ENCODE measurements at regions of chr19 and their contacts with region 1.

Region 1: GRCh38 chr19:11293433-11294389 is 2.2 kb upstream of the TSPAN16 start:
- DNase-seq: peak; percentile 96
- ATAC-seq: peak; percentile 97

Region 2: GRCh38 chr19:10828981-10829821 is 464.5 kb before region 1 on chr19:
- intact Hi-C with region 1: no loop called
- DNase-seq: no peak
- ATAC-seq: no peak

Region 3: DNA sequence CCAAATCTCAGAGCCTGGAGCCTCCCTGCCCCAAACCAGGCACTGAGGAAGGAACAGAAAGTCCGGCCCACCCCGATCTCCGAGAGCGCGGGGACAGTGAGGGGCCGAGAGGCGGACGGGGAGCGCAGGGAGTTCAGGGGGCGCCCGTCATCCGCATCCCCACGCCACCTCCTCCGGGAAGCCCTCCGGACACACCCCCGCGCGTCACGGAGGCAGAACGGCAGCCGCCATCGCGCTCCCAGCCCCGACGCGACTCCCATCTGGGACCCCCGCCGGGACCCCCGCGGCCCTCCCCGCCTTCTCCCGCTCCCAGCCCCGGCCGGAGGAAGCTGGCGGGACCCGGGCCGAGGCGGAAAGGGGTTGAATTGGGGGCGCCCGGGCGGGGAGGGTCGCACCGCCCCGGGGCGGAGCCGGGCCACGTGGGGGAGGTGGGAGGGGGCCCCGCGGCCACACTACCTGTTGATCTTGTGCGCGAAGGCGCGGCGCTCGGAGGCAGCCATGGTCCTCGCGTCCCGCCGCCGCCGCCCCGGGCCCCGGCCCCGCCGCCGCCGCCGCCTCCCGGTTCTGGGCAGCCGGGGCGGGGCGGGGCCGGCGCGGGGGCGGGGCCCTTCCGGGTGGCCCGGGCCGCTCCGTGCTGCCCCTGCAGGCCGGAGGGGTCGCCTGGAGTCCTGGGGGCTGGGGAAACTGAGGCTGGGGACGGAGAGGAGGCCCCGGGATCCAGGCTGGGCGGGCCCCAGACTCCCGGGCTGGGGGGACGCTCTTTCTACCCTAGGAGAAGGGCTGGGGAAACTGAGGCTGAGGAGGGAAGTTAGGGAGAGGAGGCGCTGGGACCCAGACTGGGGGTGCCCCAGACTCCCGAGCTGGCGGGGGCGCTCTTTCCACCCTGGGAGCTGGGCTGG is 31.5 kb before region 1 on chr19 and contains the start of gene DOCK6:
- intact Hi-C with region 1: no loop called
- DNase-seq: no peak
- ATAC-seq: peak; percentile 71
- total RNA-seq, gene DOCK6: 131 TPM

Region 4: DNA sequence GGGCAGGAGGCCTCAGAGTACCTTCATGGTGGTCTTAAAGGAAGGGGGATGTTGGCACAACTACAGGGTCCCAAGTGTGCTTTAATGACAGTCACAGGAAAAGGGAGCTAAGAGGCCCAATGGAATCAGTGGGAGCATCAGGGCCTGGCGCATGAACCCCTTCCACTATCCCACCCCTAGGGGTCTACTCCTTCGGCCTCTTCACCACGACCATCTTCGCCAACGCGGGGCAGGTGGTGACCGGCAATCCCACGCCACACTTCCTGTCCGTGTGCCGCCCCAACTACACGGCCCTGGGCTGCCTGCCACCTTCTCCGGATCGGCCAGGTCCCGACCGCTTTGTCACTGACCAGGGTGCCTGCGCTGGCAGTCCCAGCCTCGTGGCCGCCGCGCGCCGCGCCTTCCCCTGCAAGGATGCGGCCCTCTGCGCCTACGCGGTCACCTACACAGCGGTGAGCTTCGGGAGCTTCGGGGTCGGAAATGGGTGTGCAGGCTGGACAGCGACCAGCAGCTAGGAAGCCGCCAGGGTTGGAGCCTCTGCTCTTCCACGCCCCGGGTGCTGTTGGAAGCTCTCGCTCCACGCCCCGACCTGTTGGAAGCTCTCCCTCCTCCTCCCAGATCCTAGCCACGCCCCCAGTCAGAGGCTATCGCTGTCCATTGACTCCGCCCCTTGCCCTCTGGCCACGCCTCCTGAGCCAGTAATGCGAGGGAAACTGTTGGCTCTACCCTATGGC is 67.5 kb after region 1 on chr19:
- intact Hi-C with region 1: loop called (anchors 10 kb)
- DNase-seq: peak; percentile 76
- ATAC-seq: peak; percentile 8

Region 5: GRCh38 chr19:11446652-11447301 is 153.1 kb after region 1 on chr19:
- intact Hi-C with region 1: loop called (anchors 10 kb)
- DNase-seq: no peak
- ATAC-seq: peak; percentile 71

Measured in sciatic nerve (tissue), 2 donors.